Right ventricle myocardium inferior (tissue), 1 donor: ENCODE measurements at regions of chr3 and their contacts with region 1.

Region 1: GRCh38 chr3:2268779-2269178 is 170.1 kb downstream of the CNTN4 start:
- DNase-seq: no peak
- ATAC-seq: no peak

Region 2: GRCh38 chr3:2372306-2372705 is 103.5 kb after region 1 on chr3:
- intact Hi-C with region 1: no loop called
- DNase-seq: no peak
- ATAC-seq: no peak

Region 3: DNA sequence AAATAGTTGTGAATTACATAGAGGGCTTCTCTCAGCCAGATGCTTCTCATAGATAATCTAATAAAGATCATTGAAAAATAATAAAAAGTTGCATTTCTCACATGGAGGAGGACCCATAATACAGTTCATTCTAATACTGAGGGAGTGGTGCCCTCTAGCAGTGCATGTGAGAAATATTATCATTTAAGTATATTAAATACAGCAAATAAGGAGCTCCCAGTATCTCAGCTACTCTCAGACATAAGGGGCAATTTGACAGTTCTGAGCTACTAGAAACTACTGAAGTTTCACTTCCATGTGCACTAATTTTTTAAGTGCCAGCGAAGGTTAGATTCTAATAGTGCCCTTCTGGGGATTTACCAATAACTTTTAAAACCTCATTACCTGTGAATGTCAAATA is 653.1 kb after region 1 on chr3:
- intact Hi-C with region 1: loop called (anchors 10 kb)
- DNase-seq: no peak
- ATAC-seq: no peak